ENCODE measurements at regions of chr16 and their contacts with region 1.

Region 1: DNA sequence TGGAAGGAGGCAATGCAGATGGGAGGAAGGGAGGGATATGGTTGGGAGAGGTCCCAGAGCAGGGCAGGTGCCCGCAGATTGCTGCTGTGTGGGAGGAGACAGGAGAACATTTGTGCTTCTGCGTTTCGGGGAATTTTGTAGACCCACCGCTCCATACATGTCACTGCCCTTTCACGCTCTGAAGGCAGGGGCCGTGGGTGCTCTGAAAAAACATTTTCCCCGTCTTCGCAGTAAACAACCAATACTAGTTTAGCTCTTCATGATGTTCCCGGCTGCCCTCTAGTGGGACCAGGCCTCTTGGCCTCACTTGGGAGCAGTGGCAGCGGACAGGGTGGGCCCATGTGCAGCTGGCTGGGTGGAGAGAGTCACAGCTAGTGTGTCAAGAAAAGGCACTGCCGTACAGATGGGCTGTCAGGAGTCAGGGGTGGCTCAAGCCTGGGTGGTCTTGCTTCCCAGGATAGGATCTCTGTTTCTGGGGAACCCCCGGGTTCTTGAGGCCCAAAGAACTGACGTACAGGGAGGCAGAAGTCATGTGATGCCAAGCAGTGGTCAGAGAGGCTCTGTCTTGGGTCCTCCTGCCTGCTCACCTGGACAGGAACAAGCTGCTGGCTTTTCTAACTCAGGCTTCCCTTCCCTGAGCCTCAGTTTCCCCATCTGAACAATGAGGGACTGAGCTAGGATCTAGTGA is 46.5 kb upstream of the CPNE2 start:
- DNase-seq: peak; percentile 84 to 91
- ATAC-seq: peak; percentile 82
- H3K4me3 ChIP-seq: no peak overlapping the region
- H3K27ac ChIP-seq: no peak overlapping the region
- H3K4me1 ChIP-seq: no peaks in the 10 kb centered on the region
- H3K27me3 ChIP-seq: no peaks in the 10 kb centered on the region

Region 2: GRCh38 chr16:56964243-56965148 is 81.3 kb before region 1 on chr16:
- intact Hi-C with region 1: loop called (anchors 10 kb)
- DNase-seq: peak; percentile 93 to 96
- ATAC-seq: peak; percentile 75
- H3K4me3 ChIP-seq: no peak overlapping the region
- H3K27ac ChIP-seq: no peak overlapping the region
- H3K4me1 ChIP-seq: no peaks in the 10 kb centered on the region
- H3K27me3 ChIP-seq: no peaks in the 10 kb centered on the region

Region 3: GRCh38 chr16:57029161-57030160 is 16.4 kb before region 1 on chr16:
- intact Hi-C with region 1: no loop called
- DNase-seq: peak in 1 of 2 donors; percentile 62
- ATAC-seq: no peak
- H3K4me3 ChIP-seq: no peak overlapping the region
- H3K27ac ChIP-seq: no peak overlapping the region
- H3K4me1 ChIP-seq: no peaks in the 10 kb centered on the region
- H3K27me3 ChIP-seq: no peaks in the 10 kb centered on the region

Region 4: DNA sequence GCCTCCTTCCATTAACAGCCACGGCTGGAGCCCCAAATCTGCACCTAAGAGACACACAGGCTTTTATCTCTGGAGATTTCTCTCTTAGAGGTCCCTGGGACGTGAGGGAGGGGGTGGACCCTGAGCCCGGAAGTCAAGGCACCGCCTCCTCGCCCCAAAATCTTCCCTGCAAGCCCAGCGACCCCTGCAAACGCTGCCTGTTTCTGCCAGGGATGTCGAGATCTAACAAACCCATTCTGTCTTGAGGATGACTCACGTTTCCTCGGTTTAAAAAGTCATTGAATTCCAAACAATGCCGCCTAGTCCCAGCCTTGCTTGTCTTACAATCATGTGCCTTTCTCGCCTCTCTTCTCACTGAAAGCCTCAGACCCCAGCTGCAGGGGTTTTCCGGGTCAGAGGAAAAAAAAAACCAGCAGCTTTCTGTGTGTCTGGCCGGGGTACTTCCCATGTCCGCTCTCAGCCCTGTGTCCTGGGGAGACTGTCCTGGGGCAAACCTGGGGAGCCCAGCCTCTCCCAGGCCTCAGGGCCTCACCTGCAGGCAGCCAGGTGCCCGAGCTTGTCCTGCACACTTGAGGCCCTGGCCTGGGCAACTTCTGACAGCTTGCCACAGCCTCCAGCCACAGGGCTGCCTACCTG is 214.6 kb after region 1 on chr16:
- intact Hi-C with region 1: no loop called
- DNase-seq: peak in 1 of 2 donors; percentile 59
- ATAC-seq: no peak
- H3K4me3 ChIP-seq: no peak overlapping the region
- H3K27ac ChIP-seq: no peak overlapping the region
- H3K4me1 ChIP-seq: no peaks in the 10 kb centered on the region
- H3K27me3 ChIP-seq: no peaks in the 10 kb centered on the region

Measured in aorta (tissue), 5 donors.